Naive thymus-derived CD4-positive, alpha-beta T cell (primary cell): ENCODE measurements at regions of chr16 and their contacts with region 1.

Region 1: DNA sequence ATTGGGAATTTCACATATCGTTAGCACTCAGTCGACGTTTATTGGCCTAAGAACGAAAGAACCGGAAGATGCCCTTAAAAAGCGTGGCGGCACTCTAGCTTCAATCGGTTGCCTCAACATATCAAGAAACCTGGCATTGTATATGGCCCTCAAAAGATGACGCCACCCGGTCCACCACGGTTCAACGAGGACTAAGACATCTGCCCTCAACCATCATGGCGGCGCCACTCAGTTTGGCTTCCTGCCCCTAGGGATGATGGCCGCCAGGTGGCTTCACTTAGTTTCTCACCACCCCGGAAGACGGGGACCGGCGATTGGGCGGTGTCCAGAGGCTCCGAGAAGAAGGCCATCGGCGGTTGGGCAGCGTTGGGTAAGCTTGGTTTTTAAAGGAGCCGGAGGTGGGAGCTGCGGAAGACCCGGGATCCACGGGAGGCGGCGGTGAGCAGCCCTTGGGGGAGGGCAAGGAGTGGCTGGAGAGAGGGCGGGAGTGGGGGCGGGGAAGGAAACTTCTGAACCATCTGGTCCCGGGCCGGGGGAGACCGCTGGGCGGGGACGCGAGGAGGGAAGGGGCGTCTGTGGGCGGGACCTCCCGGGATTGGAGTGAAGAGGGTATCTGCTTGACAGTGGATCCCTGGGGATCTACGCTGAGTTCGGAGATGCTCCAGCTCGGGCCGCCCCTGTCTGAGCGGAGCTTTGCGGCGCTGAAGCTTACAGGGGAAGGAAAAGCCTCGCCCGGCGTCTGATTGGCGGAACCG is at the start of gene PRR14:
- DNase-seq: peak; percentile 87 to 99 (median 96)
- ATAC-seq: peak; percentile 93
- H3K4me3 ChIP-seq: peak within 1 kb of the TSS; percentile 100
- H3K4me3 Mint-ChIP-seq: peak within 1 kb of the TSS; percentile 86 to 100 (median 98)
- H3K27ac ChIP-seq: peak within 1 kb of the TSS; percentile 90
- H3K27ac Mint-ChIP-seq: peak within 1 kb of the TSS; percentile 95 to 99 (median 98)
- H3K4me1 ChIP-seq: peaks cover 9 to 10% of the 10 kb centered on the region in 2 donors
- H3K4me1 Mint-ChIP-seq: peaks cover 19 to 39% (median 22%) of the 10 kb centered on the region in 7 donors
- H3K27me3 ChIP-seq: no peaks in the 10 kb centered on the region
- H3K27me3 Mint-ChIP-seq: peaks cover 0 to 3% (median 0%) of the 10 kb centered on the region in 5 donors
- total RNA-seq, gene PRR14: 57.6 to 91.9 (median 82.5) TPM

Region 2: GRCh38 chr16:30378236-30379204 is 272.0 kb before region 1 on chr16:
- CTCF ChIA-PET with region 1: no interaction called
- POLR2A ChIA-PET with region 1: no interaction called
- intact Hi-C with region 1: loop called in 1 of 2 experiments (anchors 2 kb)
- DNase-seq: peak; percentile 97 to 99 (median 99)
- ATAC-seq: peak; percentile 91
- H3K4me3 ChIP-seq: peak overlapping the region; percentile 88
- H3K4me3 Mint-ChIP-seq: peak overlapping the region; percentile 90 to 100 (median 97)
- H3K27ac ChIP-seq: peak overlapping the region; percentile 100
- H3K27ac Mint-ChIP-seq: peak overlapping the region; percentile 98 to 100 (median 100)
- H3K4me1 ChIP-seq: peaks cover 54 to 56% of the 10 kb centered on the region in 2 donors
- H3K4me1 Mint-ChIP-seq: peaks cover 32 to 61% (median 49%) of the 10 kb centered on the region in 7 donors
- H3K27me3 ChIP-seq: no peaks in the 10 kb centered on the region
- H3K27me3 Mint-ChIP-seq: no peaks in the 10 kb centered on the region

Region 3: DNA sequence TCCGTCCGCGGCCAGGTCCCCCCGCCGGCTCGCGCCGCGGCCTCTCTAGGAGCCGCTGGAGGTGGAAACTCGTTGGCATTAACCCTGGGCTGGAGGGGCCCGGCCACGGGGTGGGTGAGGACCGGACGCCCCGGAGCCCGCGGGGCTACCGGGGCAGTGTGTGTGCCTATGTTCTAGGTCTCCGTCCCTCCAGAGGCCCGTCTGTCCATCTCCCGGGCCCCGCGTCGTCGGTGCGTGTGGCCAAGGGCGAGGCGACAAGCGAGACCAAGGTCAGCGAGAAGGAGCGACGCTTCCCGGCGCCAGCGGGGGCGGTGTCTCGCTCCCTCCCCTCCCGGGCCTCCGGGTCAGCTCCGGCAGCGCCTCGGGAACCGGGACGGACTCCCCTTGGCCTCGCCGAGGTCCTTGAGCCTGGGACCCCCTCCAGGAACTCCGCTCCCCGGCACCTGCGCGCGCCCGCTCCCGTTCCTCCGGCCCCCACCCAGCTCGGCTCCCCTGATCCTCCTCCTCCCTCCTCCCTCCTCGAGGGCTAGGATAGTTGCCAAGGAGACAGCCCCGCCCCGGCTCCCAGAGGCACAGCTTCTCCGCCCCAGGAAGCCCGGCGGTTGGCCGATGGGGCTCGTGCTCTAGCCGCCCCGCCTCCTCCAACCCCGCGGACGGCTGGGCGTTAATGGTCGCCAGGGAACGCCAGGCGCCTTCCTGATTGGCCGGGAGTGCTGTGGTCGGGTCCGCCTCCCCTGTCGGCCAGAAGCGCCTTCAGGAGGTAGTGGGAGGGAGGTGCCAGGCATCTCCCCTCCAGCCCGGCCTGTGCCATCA is 123.5 kb before region 1 on chr16:
- CTCF ChIA-PET with region 1: no interaction called
- POLR2A ChIA-PET with region 1: no interaction called
- intact Hi-C with region 1: loop called in 1 of 2 experiments (anchors 2 kb)
- DNase-seq: peak; percentile 59 to 95 (median 64)
- ATAC-seq: peak; percentile 87
- H3K4me3 ChIP-seq: peak overlapping the region; percentile 75
- H3K4me3 Mint-ChIP-seq: peak overlapping the region; percentile 78 to 92 (median 88)
- H3K27ac ChIP-seq: peak overlapping the region; percentile 76
- H3K27ac Mint-ChIP-seq: peak overlapping the region; percentile 82 to 94 (median 88)
- H3K4me1 ChIP-seq: peaks cover 0 to 10% of the 10 kb centered on the region in 2 donors
- H3K4me1 Mint-ChIP-seq: peaks cover 16 to 39% (median 32%) of the 10 kb centered on the region in 7 donors
- H3K27me3 ChIP-seq: no peaks in the 10 kb centered on the region
- H3K27me3 Mint-ChIP-seq: no peaks in the 10 kb centered on the region

Region 4: DNA sequence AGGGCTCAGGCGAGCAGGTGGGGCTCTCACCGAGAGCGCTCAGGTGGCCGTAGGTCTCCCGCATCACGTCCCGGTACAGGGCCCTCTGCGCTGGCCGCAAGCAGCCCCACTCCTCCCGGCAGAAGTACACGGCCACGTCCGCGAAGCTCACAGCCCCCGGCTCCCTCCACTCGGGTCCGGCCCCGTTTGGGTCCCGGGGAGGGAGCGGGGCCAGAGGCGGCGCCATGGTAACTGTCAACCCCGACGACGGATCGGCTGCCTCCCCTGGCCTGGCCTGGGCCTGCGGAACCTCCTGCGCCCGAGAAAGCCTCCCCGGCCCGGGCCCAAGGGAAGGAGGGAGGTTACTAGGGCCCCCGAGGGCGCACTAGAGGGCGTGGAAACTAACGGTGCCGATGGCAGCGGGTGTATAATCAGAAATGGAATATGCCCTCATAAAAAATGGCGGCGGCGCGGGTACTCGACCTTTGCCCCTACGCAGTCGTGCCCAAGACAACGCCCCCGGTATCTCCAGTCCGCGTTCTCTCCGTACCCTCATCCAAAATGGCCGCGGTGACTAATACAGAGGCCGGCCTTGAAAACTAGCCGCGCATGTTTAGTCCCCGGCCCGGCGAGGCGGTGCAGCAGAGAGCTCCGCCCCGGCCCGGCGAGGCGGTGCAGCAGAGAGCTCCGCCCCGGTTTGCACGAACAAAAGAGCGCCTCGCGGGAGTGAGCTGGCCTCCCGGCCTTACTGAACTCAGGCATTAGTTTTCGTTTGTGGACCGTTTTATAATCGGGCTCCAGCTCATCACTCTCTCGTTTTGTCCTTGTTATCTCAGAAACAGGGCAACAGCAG is 92.4 kb before region 1 on chr16 and contains the start of gene ZNF764:
- CTCF ChIA-PET with region 1: no interaction called
- POLR2A ChIA-PET with region 1: interaction called, 5 read pairs
- intact Hi-C with region 1: loop called in 1 of 2 experiments (anchors 1 kb)
- DNase-seq: peak; percentile 79 to 95 (median 91)
- ATAC-seq: peak; percentile 95
- H3K4me3 ChIP-seq: peak within 1 kb of the TSS; percentile 92
- H3K4me3 Mint-ChIP-seq: peak within 1 kb of the TSS; percentile 83 to 92 (median 90)
- H3K27ac ChIP-seq: peak within 1 kb of the TSS; percentile 99
- H3K27ac Mint-ChIP-seq: peak within 1 kb of the TSS; percentile 87 to 94 (median 92)
- H3K4me1 ChIP-seq: peaks cover 12 to 15% of the 10 kb centered on the region in 2 donors
- H3K4me1 Mint-ChIP-seq: peaks cover 33 to 58% (median 43%) of the 10 kb centered on the region in 7 donors
- H3K27me3 ChIP-seq: no peaks in the 10 kb centered on the region
- H3K27me3 Mint-ChIP-seq: no peaks in the 10 kb centered on the region
- total RNA-seq, gene ZNF764: 11.9 to 20.9 (median 19.3) TPM

Region 5: GRCh38 chr16:30585400-30586189 is 65.0 kb before region 1 on chr16 and contains the start of gene ZNF785:
- CTCF ChIA-PET with region 1: interaction called, 3 read pairs
- POLR2A ChIA-PET with region 1: interaction called, 13 read pairs
- intact Hi-C with region 1: loop called in 1 of 2 experiments (anchors 1 kb)
- DNase-seq: peak; percentile 72 to 95 (median 93)
- ATAC-seq: peak; percentile 100
- H3K4me3 ChIP-seq: peak within 1 kb of the TSS; percentile 77
- H3K4me3 Mint-ChIP-seq: peak within 1 kb of the TSS; percentile 85 to 98 (median 94)
- H3K27ac ChIP-seq: peak within 1 kb of the TSS; percentile 81
- H3K27ac Mint-ChIP-seq: peak within 1 kb of the TSS; percentile 89 to 95 (median 92)
- H3K4me1 ChIP-seq: peaks cover 8 to 12% of the 10 kb centered on the region in 2 donors
- H3K4me1 Mint-ChIP-seq: peaks cover 6 to 44% (median 32%) of the 10 kb centered on the region in 7 donors
- H3K27me3 ChIP-seq: no peaks in the 10 kb centered on the region
- H3K27me3 Mint-ChIP-seq: peaks cover 0 to 2% (median 0%) of the 10 kb centered on the region in 5 donors
- total RNA-seq, gene ZNF785: 10.2 to 37.1 (median 21.4) TPM

Region 6: GRCh38 chr16:30628627-30629540 is 21.7 kb before region 1 on chr16:
- CTCF ChIA-PET with region 1: interaction called, 10 read pairs
- POLR2A ChIA-PET with region 1: interaction called, 9 read pairs
- intact Hi-C with region 1: loop called (anchors 1 kb)
- DNase-seq: peak; percentile 64 to 89 (median 80)
- ATAC-seq: peak; percentile 97
- H3K4me3 ChIP-seq: peak overlapping the region; percentile 51
- H3K4me3 Mint-ChIP-seq: peak overlapping the region; percentile 58 to 85 (median 72)
- H3K27ac ChIP-seq: peak overlapping the region; percentile 60
- H3K27ac Mint-ChIP-seq: peak overlapping the region in 8 of 9 donors; percentile 58 to 89 (median 80)
- H3K4me1 ChIP-seq: peaks cover 0 to 3% of the 10 kb centered on the region in 2 donors
- H3K4me1 Mint-ChIP-seq: peaks cover 4 to 12% (median 8%) of the 10 kb centered on the region in 7 donors
- H3K27me3 ChIP-seq: no peaks in the 10 kb centered on the region
- H3K27me3 Mint-ChIP-seq: peaks cover 0 to under 1% (median 0%) of the 10 kb centered on the region in 5 donors

Region 7: GRCh38 chr16:30761928-30762810 is 111.6 kb after region 1 on chr16 and contains the starts of genes CFAP119 and RNF40:
- CTCF ChIA-PET with region 1: no interaction called
- POLR2A ChIA-PET with region 1: no interaction called
- intact Hi-C with region 1: loop called (anchors 1 to 5 kb)
- DNase-seq: peak; percentile 73 to 97 (median 88)
- ATAC-seq: peak; percentile 96
- H3K4me3 ChIP-seq: peak within 1 kb of the TSS; percentile 99
- H3K4me3 Mint-ChIP-seq: peak within 1 kb of the TSS; percentile 96 to 98 (median 97)
- H3K27ac ChIP-seq: peak within 1 kb of the TSS; percentile 88
- H3K27ac Mint-ChIP-seq: peak within 1 kb of the TSS; percentile 82 to 96 (median 93)
- H3K4me1 ChIP-seq: peaks cover 17 to 31% of the 10 kb centered on the region in 2 donors
- H3K4me1 Mint-ChIP-seq: peaks cover 21 to 41% (median 32%) of the 10 kb centered on the region in 7 donors
- H3K27me3 ChIP-seq: no peaks in the 10 kb centered on the region
- H3K27me3 Mint-ChIP-seq: no peaks in the 10 kb centered on the region
- total RNA-seq, gene CFAP119: 2.3 to 5.9 (median 2.9) TPM
- total RNA-seq, gene RNF40: 68.7 to 122 (median 114) TPM